Activated CD4-positive, alpha-beta T cell treated with anti-CD3 and anti-CD28 coated beads for 36 hours (primary cell): ENCODE measurements at regions of chr16 and their contacts with region 1.

Region 1: GRCh38 chr16:24668481-24669061 is 60.9 kb upstream of the TNRC6A start:
- DNase-seq: peak; percentile 76
- ATAC-seq: peak; percentile 80
- H3K4me3 Mint-ChIP-seq: peak overlapping the region; percentile 47
- H3K27ac Mint-ChIP-seq: peak overlapping the region; percentile 87
- H3K4me1 Mint-ChIP-seq: peaks cover 57% of the 10 kb centered on the region
- H3K27me3 Mint-ChIP-seq: peaks cover 13% of the 10 kb centered on the region

Region 2: GRCh38 chr16:23826528-23827045 is 842.0 kb before region 1 on chr16:
- CTCF ChIA-PET with region 1: no interaction called
- POLR2A ChIA-PET with region 1: no interaction called
- intact Hi-C with region 1: loop called in 1 of 2 experiments (anchors 2 kb)
- DNase-seq: no peak
- ATAC-seq: peak; percentile 40
- H3K4me3 Mint-ChIP-seq: peak overlapping the region; percentile 40
- H3K27ac Mint-ChIP-seq: peak overlapping the region; percentile 83
- H3K4me1 Mint-ChIP-seq: peaks cover 31% of the 10 kb centered on the region
- H3K27me3 Mint-ChIP-seq: no peaks in the 10 kb centered on the region

Region 3: DNA sequence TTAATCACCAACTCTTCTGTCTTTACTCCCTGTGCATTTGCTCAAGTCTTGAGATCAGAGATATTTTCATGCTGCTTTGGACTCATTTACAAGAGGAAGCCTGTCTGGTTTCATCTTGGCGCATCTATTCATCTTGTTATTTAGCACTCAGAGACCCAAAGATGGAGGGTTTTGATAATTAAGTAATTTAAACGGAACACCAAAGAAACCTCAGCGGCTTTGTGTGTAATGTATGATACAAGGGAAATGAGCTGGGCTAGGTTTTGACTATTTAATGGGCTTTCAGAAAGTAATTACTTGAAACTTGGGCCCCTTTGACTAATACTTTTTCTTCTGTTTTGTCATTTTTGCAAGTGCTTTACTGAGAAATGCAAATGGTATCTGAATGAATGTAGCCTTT is 478.6 kb before region 1 on chr16:
- CTCF ChIA-PET with region 1: no interaction called
- POLR2A ChIA-PET with region 1: interaction called, 6 read pairs
- intact Hi-C with region 1: loop called in 1 of 2 experiments (anchors 1 kb)
- DNase-seq: peak; percentile 22
- ATAC-seq: peak; percentile 77
- H3K4me3 Mint-ChIP-seq: no peak overlapping the region
- H3K27ac Mint-ChIP-seq: peak overlapping the region; percentile 85
- H3K4me1 Mint-ChIP-seq: peaks cover 37% of the 10 kb centered on the region
- H3K27me3 Mint-ChIP-seq: no peaks in the 10 kb centered on the region

Region 4: GRCh38 chr16:24721830-24722238 is 53.3 kb after region 1 on chr16:
- CTCF ChIA-PET with region 1: interaction called, 3 read pairs
- POLR2A ChIA-PET with region 1: no interaction called
- intact Hi-C with region 1: loop called (anchors 1 kb)
- DNase-seq: peak; percentile 81
- ATAC-seq: peak; percentile 90
- H3K4me3 Mint-ChIP-seq: no peak overlapping the region
- H3K27ac Mint-ChIP-seq: peak overlapping the region; percentile 6
- H3K4me1 Mint-ChIP-seq: peaks cover 29% of the 10 kb centered on the region
- H3K27me3 Mint-ChIP-seq: peaks cover 2% of the 10 kb centered on the region

Region 5: GRCh38 chr16:24822542-24822941 is 154.0 kb after region 1 on chr16:
- CTCF ChIA-PET with region 1: no interaction called
- POLR2A ChIA-PET with region 1: no interaction called
- intact Hi-C with region 1: no loop called
- DNase-seq: no peak
- ATAC-seq: no peak
- H3K4me3 Mint-ChIP-seq: no peak overlapping the region
- H3K27ac Mint-ChIP-seq: no peak overlapping the region
- H3K4me1 Mint-ChIP-seq: no peaks in the 10 kb centered on the region
- H3K27me3 Mint-ChIP-seq: no peaks in the 10 kb centered on the region

Region 6: DNA sequence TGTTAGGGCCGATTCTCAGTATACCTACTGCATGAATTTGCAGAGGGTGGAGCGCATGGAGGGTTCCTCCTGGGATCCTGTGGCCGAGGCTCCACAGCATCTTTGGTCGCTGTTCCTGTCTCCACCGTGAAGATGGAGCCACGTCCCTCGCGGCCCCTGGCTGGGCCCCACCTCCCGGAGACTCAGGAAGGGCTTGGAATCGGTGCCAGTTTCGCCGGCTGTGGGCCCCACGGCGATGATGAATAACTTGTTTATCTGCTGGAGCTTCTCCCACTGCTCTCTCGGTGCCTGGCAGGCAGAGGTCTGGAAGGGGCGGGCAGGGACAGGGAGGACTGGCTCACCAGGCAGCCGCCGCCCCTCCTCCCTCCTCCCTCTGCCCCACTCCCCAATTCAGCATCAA is 185.3 kb after region 1 on chr16:
- CTCF ChIA-PET with region 1: no interaction called
- POLR2A ChIA-PET with region 1: no interaction called
- intact Hi-C with region 1: loop called in 1 of 2 experiments (anchors 1 kb)
- DNase-seq: peak; percentile 9
- ATAC-seq: no peak
- H3K4me3 Mint-ChIP-seq: no peak overlapping the region
- H3K27ac Mint-ChIP-seq: no peak overlapping the region
- H3K4me1 Mint-ChIP-seq: peaks cover 17% of the 10 kb centered on the region
- H3K27me3 Mint-ChIP-seq: peaks cover 11% of the 10 kb centered on the region

Region 7: DNA sequence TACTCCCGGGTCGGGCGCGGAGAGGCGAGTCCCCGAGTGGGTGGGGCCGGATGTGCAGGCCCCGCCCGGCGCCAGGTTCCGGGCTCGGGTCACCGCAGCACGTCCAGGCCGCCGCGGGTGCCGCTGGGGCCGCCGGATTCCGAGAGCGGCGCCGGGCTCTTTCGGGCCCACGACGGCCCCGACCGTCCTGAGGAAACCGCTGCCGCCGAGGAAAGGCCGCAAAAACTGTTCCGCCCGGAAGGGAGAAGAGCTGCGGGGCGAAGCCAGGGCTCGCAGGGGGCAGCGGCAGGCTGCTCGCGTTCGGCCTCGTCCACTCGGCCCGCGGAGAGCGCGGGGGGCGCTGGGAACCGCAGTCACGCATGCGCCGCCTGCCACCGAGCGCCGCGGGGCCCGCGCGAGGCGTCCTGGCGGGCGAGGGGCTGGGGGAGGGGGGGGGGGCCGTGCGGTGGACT is 589.0 kb after region 1 on chr16 and contains the start of gene ZKSCAN2:
- CTCF ChIA-PET with region 1: no interaction called
- POLR2A ChIA-PET with region 1: no interaction called
- intact Hi-C with region 1: loop called in 1 of 2 experiments (anchors 1 kb)
- DNase-seq: peak; percentile 92
- ATAC-seq: peak; percentile 82
- H3K4me3 Mint-ChIP-seq: peak within 1 kb of the TSS; percentile 93
- H3K27ac Mint-ChIP-seq: peak within 1 kb of the TSS; percentile 98
- H3K4me1 Mint-ChIP-seq: peaks cover 59% of the 10 kb centered on the region
- H3K27me3 Mint-ChIP-seq: no peaks in the 10 kb centered on the region
- total RNA-seq, gene ZKSCAN2: 5.5 to 5.6 TPM

Region 8: DNA sequence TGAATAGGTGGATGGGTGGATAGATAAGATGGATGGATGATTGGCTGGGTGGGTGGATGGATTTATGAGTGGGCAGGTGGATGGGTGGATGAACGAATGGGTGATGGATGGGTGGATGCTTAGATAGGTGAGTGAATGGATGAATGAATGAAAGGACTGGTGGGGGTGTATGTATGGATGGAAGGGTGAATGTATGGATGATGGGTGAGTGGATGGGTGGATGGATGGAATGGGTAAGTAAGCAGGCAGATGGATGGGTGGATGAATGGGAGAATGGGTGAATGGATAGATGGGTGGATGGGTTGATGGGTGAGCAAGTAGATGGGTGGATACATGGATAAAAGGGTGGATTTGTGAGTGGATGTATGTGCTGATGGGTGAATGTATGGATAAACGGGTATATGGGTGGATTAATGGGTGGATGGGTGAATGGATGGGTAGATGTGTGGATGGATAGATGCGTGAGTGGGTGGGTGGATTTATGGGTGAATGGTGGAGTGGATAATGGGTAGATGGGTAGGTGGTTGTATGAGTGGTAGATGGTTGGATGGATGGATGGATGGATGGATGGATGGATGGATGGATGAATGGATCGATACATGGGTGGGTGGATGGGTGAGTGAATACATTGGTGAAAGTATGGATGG is 1705.8 kb after region 1 on chr16:
- CTCF ChIA-PET with region 1: no interaction called
- POLR2A ChIA-PET with region 1: no interaction called
- intact Hi-C with region 1: no loop called
- DNase-seq: no peak
- ATAC-seq: no peak
- H3K4me3 Mint-ChIP-seq: no peak overlapping the region
- H3K27ac Mint-ChIP-seq: no peak overlapping the region
- H3K4me1 Mint-ChIP-seq: no peaks in the 10 kb centered on the region
- H3K27me3 Mint-ChIP-seq: no peaks in the 10 kb centered on the region